ENCODE measurements at regions of chr20 and their contacts with region 1.

Region 1: GRCh38 chr20:16761305-16761829 is 13.2 kb downstream of the OTOR start:
- DNase-seq: peak; percentile 77
- ATAC-seq: peak; percentile 96
- H3K4me3 ChIP-seq: no peak overlapping the region
- H3K27ac ChIP-seq: no peak overlapping the region
- H3K4me1 ChIP-seq: peaks cover 10% of the 10 kb centered on the region; the same call in 1 of the 2 replicates
- H3K27me3 ChIP-seq: no peaks in the 10 kb centered on the region; a peak in 1 of 5 replicates
- CTCF ChIP-seq: peak; percentile 97
- EP300 ChIP-seq: no peak
- POLR2A ChIP-seq: no peak
- RAD21 ChIP-seq: peak; percentile 91

Region 2: GRCh38 chr20:15708984-15709598 is 1052.3 kb before region 1 on chr20:
- CTCF ChIA-PET with region 1: interaction called, 3 read pairs
- POLR2A ChIA-PET with region 1: no interaction called
- in situ Hi-C with region 1: loop called (anchors 10 kb)
- intact Hi-C with region 1: loop called (anchors 1 kb)
- DNase-seq: peak; percentile 52
- ATAC-seq: peak; percentile 99
- H3K4me3 ChIP-seq: no peak overlapping the region
- H3K27ac ChIP-seq: no peak overlapping the region
- H3K4me1 ChIP-seq: no peaks in the 10 kb centered on the region
- H3K27me3 ChIP-seq: no peaks in the 10 kb centered on the region
- CTCF ChIP-seq: peak; percentile 83
- EP300 ChIP-seq: no peak
- POLR2A ChIP-seq: no peak
- RAD21 ChIP-seq: peak; percentile 76

Region 3: DNA sequence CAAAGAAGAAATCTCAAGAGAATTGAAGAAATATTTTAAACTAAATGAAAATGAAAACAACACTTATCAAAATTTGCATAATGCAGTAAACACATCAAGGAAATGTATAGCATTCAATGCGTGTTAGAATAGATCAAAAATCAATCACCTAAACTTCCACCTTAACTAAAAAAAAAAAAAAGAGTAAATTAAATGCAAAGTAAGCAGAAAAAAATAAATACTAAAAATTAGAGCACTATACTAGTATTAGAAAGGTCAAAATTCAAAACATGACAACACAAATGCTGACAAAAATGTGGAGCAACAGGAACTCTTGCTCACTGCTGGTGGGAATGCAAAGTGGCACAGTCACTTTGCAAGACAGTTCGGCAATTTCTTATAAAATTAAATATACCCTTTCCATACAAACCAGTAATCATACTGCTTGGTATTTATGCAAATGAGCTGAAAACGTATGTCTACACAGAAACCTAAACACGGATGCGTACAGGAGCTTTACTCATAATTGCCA is 291.9 kb before region 1 on chr20:
- CTCF ChIA-PET with region 1: no interaction called
- POLR2A ChIA-PET with region 1: no interaction called
- in situ Hi-C with region 1: no loop called
- intact Hi-C with region 1: no loop called
- DNase-seq: no peak
- ATAC-seq: no peak
- H3K4me3 ChIP-seq: no peak overlapping the region
- H3K27ac ChIP-seq: no peak overlapping the region
- H3K4me1 ChIP-seq: peaks cover 33% of the 10 kb centered on the region
- H3K27me3 ChIP-seq: no peaks in the 10 kb centered on the region
- CTCF ChIP-seq: no peak
- EP300 ChIP-seq: no peak
- POLR2A ChIP-seq: no peak
- RAD21 ChIP-seq: no peak

Region 4: DNA sequence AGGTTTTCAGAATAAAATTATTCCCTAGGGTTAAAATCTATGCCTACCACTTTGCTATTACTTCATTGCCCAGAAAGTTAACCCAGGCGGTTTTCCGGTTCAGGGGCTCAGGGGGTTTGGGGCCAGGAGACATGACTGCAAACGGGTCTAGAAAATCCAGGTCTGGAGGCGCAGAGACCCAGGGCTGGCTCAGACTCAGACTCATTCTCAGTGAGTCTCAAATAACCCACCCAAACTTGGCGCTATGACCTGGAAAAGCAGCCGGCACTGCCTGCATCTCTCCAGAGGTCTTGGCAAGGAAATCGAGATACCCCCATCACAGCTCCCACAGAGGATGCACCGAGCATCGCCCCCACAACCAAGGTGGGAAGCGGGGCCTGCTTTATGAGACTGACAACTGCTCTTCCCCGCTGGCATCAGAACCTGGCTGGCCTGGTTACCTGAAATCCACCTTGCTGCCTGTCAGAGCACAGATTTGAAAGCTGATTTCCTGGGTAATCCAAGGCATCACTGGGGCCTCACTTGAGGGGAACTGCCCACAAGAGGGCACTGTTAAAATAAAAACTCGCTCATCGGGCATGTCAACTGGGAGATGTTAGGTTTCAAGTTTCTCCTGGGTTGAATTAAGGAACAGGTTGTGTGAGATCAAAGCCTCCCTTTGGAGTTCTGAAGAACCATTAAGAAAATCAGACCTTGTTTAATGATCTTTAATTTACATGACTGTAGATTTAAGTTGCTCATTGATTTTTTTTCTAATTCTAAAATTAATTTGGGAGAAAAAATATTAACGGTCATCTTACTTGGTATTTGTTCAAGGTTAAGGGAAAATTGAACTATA is 243.2 kb before region 1 on chr20:
- CTCF ChIA-PET with region 1: interaction called, 28 read pairs
- POLR2A ChIA-PET with region 1: no interaction called
- in situ Hi-C with region 1: loop called (anchors 5 kb)
- intact Hi-C with region 1: loop called (anchors 1 kb)
- DNase-seq: peak; percentile 60
- ATAC-seq: peak; percentile 97
- H3K4me3 ChIP-seq: no peak overlapping the region
- H3K27ac ChIP-seq: no peak overlapping the region
- H3K4me1 ChIP-seq: no peaks in the 10 kb centered on the region
- H3K27me3 ChIP-seq: no peaks in the 10 kb centered on the region
- CTCF ChIP-seq: peak; percentile 71
- EP300 ChIP-seq: no peak
- POLR2A ChIP-seq: no peak
- RAD21 ChIP-seq: peak; percentile 82

Region 5: GRCh38 chr20:16589625-16590024 is 171.7 kb before region 1 on chr20:
- CTCF ChIA-PET with region 1: interaction called, 5 read pairs
- POLR2A ChIA-PET with region 1: no interaction called
- in situ Hi-C with region 1: no loop called
- intact Hi-C with region 1: loop called (anchors 1 kb)
- DNase-seq: no peak
- ATAC-seq: peak; percentile 77
- H3K4me3 ChIP-seq: no peak overlapping the region
- H3K27ac ChIP-seq: no peak overlapping the region
- H3K4me1 ChIP-seq: peaks cover 23% of the 10 kb centered on the region
- H3K27me3 ChIP-seq: no peaks in the 10 kb centered on the region; a peak in 2 of 5 replicates
- CTCF ChIP-seq: peak; percentile 57
- EP300 ChIP-seq: no peak
- POLR2A ChIP-seq: no peak
- RAD21 ChIP-seq: no peak

Region 6: GRCh38 chr20:16701296-16701695 is 60.1 kb before region 1 on chr20:
- CTCF ChIA-PET with region 1: interaction called, 11 read pairs
- POLR2A ChIA-PET with region 1: no interaction called
- in situ Hi-C with region 1: loop called (anchors 5 kb)
- intact Hi-C with region 1: loop called (anchors 1 kb)
- DNase-seq: peak; percentile 40
- ATAC-seq: peak; percentile 94
- H3K4me3 ChIP-seq: no peak overlapping the region
- H3K27ac ChIP-seq: no peak overlapping the region
- H3K4me1 ChIP-seq: no peaks in the 10 kb centered on the region
- H3K27me3 ChIP-seq: peaks cover 0 to 14% of the 10 kb centered on the region in 2 experiments; a peak in 2 of 5 replicates
- CTCF ChIP-seq: peak; percentile 56
- EP300 ChIP-seq: no peak
- POLR2A ChIP-seq: no peak
- RAD21 ChIP-seq: no peak